HEK293 (cell line): ENCODE measurements at regions of chr17 and their contacts with region 1.

Region 1: GRCh38 chr17:8294814-8295316 is 335 bp downstream of the SLC25A35 start:
- H3K4me3 ChIP-seq: peak overlapping the region; percentile 30
- H3K27ac ChIP-seq: peak overlapping the region; percentile 84
- H3K4me1 ChIP-seq: no peaks in the 10 kb centered on the region
- CTCF ChIP-seq: no peak

Region 2: GRCh38 chr17:8173056-8173870 is 121.6 kb before region 1 on chr17:
- CTCF ChIA-PET with region 1: no interaction called
- POLR2A ChIA-PET with region 1: interaction called, 11 read pairs
- H3K4me3 ChIP-seq: peak overlapping the region; percentile 53
- H3K27ac ChIP-seq: peak overlapping the region; percentile 89
- H3K4me1 ChIP-seq: peaks cover 10% of the 10 kb centered on the region
- CTCF ChIP-seq: no peak

Region 3: GRCh38 chr17:8189711-8190477 is 105.0 kb before region 1 on chr17 and contains the start of gene BORCS6:
- CTCF ChIA-PET with region 1: interaction called, 3 read pairs
- POLR2A ChIA-PET with region 1: interaction called, 11 read pairs
- H3K4me3 ChIP-seq: peak within 1 kb of the TSS; percentile 75
- H3K27ac ChIP-seq: peak within 1 kb of the TSS; percentile 75; the same call in 1 of the 2 replicates
- H3K4me1 ChIP-seq: peaks cover 13% of the 10 kb centered on the region
- CTCF ChIP-seq: peak; percentile 88

Region 4: DNA sequence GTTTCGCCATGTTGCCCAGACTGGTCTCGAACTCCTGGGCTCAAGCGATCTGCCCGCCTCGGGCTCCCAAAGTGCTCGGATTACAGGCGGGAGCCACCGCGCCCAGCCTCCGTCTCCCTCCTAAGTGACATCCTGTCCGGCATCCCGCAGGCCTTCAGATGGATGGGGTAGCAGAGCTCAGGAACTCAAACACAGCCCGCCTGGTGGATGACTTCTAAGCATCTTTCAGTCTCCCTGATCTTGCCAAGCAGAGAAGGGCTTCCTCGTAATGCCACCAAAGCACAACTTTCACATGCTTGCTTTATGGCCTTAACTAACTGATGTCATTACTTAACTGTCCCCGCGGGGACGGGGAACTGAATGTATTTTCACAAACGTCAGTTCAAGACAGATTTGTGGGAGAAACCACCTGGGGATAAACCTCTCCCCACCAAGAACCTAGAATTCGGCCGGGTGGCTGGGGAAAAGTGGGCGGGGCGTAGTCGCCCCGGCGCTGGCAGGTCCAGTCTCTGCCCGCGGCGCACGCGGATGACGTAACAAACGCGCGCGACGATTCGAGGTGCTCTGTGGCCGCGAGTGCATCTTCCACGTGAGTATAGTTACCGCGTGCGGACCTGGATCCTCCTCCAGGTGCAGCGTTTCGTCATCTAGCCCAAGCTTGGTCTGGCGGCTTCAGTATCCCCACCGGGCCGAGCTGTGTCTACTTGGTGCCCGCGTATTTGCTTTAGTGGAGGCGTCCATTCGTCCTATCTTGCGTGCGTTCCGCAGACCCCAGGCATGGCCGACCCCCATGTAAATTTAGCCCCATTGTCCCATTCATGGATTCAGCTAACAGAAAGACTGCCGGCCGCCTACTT is 45.9 kb before region 1 on chr17 and contains the start of gene PFAS:
- CTCF ChIA-PET with region 1: interaction called, 5 read pairs
- POLR2A ChIA-PET with region 1: interaction called, 43 read pairs
- H3K4me3 ChIP-seq: peak within 1 kb of the TSS; percentile 77
- H3K27ac ChIP-seq: peak within 1 kb of the TSS; percentile 91
- H3K4me1 ChIP-seq: peaks cover 6% of the 10 kb centered on the region
- CTCF ChIP-seq: no peak

Region 5: DNA sequence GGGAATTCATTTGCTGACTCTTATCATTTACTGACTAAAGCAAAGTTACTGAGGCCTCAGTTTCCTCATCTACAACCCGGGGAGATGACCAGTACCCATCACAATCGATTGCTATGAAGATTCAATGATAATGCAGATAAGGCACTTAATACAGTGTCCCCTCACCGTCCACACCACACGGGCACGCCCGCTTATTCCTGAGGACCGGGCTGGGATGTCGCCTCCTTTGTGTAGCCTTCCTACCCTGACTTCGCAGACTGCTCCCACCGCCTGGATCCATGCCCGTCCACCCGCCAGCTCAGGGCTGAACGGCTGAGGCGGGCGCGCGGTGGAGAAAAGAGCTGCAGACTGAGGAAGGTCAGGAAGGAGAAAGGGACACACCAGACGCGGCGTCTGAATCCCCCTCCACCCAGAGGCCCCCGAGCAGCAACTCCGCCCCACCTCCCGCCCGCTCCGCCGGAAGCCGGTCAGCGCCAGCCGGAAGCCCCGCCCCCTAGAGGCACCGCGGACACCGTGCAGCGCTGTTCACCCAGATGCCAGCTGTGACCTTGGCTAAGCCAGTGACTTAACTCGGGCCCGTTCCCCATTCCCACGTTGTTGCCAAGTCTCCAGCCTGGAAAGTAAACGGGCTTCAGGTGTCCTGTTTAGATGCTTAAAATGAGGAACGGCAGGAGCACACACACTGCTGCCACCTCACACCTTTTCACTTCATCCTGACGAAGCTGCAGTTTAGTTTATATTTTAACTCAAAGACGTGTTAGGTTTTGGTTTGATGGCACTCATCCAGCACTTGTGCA is 81.6 kb after region 1 on chr17 and contains the start of gene KRABD2:
- CTCF ChIA-PET with region 1: interaction called, 6 read pairs
- POLR2A ChIA-PET with region 1: interaction called, 11 read pairs
- H3K4me3 ChIP-seq: peak within 1 kb of the TSS; percentile 69
- H3K27ac ChIP-seq: peak within 1 kb of the TSS; percentile 90
- H3K4me1 ChIP-seq: peaks cover 16% of the 10 kb centered on the region
- CTCF ChIP-seq: peak; percentile 96